ENCODE measurements at regions of chr2 and their contacts with region 1.

Region 1: GRCh38 chr2:189661148-189661956 is at the start of gene ASNSD1:
- DNase-seq: peak; percentile 99
- ATAC-seq: peak; percentile 91
- H3K4me3 ChIP-seq: peak within 1 kb of the TSS; percentile 82
- H3K27ac ChIP-seq: peak within 1 kb of the TSS; percentile 93
- H3K4me1 ChIP-seq: peaks cover 13% of the 10 kb centered on the region; the same call in 1 of the 2 replicates
- H3K27me3 ChIP-seq: no peaks in the 10 kb centered on the region
- CTCF ChIP-seq: peak; percentile 76 to 99 (median 97)
- EP300 ChIP-seq: no peak
- POLR2A ChIP-seq: peak; percentile 99
- RAD21 ChIP-seq: peak; percentile 93
- polyA plus RNA-seq, gene ASNSD1: 70.1 to 74.1 TPM

Region 2: GRCh38 chr2:189648846-189649509 is 12.4 kb before region 1 on chr2:
- CTCF ChIA-PET with region 1: interaction called, 17 read pairs
- POLR2A ChIA-PET with region 1: no interaction called
- RAD21 ChIA-PET with region 1: interaction called, 6 read pairs
- SMC1A ChIA-PET with region 1: interaction called, 9 read pairs
- in situ Hi-C with region 1: no loop called
- intact Hi-C with region 1: no loop called
- DNase-seq: no peak
- ATAC-seq: no peak
- H3K4me3 ChIP-seq: no peak overlapping the region
- H3K27ac ChIP-seq: no peak overlapping the region
- H3K4me1 ChIP-seq: no peaks in the 10 kb centered on the region
- H3K27me3 ChIP-seq: no peaks in the 10 kb centered on the region
- CTCF ChIP-seq: no peak
- EP300 ChIP-seq: no peak
- POLR2A ChIP-seq: no peak
- RAD21 ChIP-seq: no peak

Region 3: GRCh38 chr2:189698020-189698887 is 36.9 kb after region 1 on chr2:
- CTCF ChIA-PET with region 1: interaction called, 112 read pairs
- POLR2A ChIA-PET with region 1: interaction called, 3 read pairs
- RAD21 ChIA-PET with region 1: interaction called, 10 read pairs
- SMC1A ChIA-PET with region 1: interaction called, 66 read pairs
- in situ Hi-C with region 1: no loop called
- intact Hi-C with region 1: loop called (anchors 1 kb)
- DNase-seq: no peak
- ATAC-seq: peak; percentile 88
- H3K4me3 ChIP-seq: no peak overlapping the region
- H3K27ac ChIP-seq: no peak overlapping the region
- H3K4me1 ChIP-seq: no peaks in the 10 kb centered on the region
- H3K27me3 ChIP-seq: no peaks in the 10 kb centered on the region
- CTCF ChIP-seq: peak; percentile 35 to 49 (median 37); a peak in 5 of 6 replicates
- EP300 ChIP-seq: no peak
- POLR2A ChIP-seq: no peak
- RAD21 ChIP-seq: peak; percentile 44

Region 4: DNA sequence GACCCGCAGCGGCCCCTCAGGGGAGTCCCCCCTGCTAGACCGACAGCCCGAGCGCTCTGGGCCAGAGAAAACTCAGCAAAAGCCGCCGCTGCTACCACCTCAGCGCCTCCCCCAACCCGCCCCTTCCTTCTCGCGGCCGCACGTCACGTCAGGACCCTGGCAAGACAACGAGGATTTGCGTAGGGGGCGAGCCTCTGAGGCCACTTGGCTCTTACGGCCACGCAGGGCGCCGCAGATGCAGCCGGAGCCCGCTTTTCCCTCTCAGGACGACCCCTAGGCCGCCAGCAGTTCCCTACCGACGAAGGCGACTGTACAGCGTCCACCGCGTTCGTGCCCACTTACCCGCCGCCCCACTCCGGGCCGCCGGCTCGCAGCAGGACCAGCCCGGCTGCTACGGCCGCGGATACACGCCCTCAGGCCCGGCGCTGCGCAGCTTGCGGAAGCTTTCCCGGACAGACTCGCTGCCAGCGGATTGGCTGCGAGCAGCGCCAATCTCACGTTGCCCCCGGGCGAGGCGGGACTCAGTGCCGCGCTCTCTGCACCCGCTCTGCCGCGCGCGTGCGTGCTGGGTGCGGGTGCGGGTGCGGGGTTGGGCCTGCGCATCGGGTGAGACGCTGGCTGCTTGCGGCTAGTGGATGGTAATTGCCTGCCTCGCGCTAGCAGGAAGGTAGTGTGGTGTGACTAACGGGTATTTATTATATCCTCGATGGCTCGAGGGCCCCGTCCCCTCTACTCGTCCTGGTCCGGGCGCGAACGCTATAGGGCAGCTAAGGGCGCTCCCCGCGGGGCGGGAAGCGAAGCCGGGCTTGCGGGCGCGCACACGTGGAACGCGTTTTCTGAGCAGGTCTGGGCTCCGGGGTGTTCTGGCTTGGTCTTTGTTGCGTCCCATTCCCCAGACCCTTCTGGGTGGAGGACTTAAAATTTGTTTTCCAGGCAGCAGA is 122.8 kb after region 1 on chr2 and contains the starts of genes ORMDL1 and PMS1:
- CTCF ChIA-PET with region 1: interaction called, 3 read pairs
- POLR2A ChIA-PET with region 1: no interaction called
- RAD21 ChIA-PET with region 1: interaction called, 4 read pairs
- SMC1A ChIA-PET with region 1: interaction called, 3 read pairs
- in situ Hi-C with region 1: no loop called
- intact Hi-C with region 1: loop called (anchors 5 kb)
- DNase-seq: peak; percentile 86
- ATAC-seq: peak; percentile 95
- H3K4me3 ChIP-seq: peak within 1 kb of the TSS; percentile 86
- H3K27ac ChIP-seq: peak within 1 kb of the TSS; percentile 92
- H3K4me1 ChIP-seq: peaks cover 4% of the 10 kb centered on the region; the same call in 1 of the 2 replicates
- H3K27me3 ChIP-seq: no peaks in the 10 kb centered on the region
- CTCF ChIP-seq: no peak
- EP300 ChIP-seq: 0 out of 4 replicates have a peak, but pooled peaks of 1 of the 2 experiments have one; percentile 27
- POLR2A ChIP-seq: peak; percentile 99
- RAD21 ChIP-seq: no peak
- polyA plus RNA-seq, gene ORMDL1: 68.9 to 89.5 TPM
- polyA plus RNA-seq, gene PMS1: 18.7 to 19.2 TPM

Region 5: DNA sequence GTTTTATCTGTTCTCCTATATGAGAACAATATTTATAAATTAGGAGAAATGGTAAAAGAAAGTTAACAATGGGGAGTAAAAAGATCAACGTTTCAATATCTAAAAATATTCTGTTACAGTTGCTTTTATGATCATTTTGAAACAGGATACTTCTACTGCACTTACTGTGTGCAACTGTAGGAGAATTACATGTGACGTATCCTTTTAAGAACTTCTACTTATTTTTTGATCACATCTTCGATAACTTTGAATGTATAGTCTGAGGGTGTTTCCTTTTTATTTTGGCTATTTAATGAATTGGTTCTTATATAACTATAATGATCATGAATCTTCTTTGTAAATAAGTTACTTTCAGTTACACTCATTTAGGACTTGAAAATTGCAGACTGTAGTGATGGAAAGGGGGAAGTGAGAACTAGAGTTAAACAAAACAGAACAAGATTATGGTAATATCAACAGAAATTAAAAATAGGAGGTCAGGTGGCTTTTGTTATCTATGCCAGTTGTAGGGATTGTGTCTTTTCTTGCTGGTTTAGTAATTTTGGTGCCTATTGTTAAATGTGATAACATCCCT is 291.3 kb after region 1 on chr2:
- CTCF ChIA-PET with region 1: no interaction called
- POLR2A ChIA-PET with region 1: no interaction called
- RAD21 ChIA-PET with region 1: no interaction called
- SMC1A ChIA-PET with region 1: no interaction called
- in situ Hi-C with region 1: no loop called
- intact Hi-C with region 1: loop called (anchors 5 kb)
- DNase-seq: peak; percentile 65
- ATAC-seq: peak; percentile 91
- H3K4me3 ChIP-seq: no peak overlapping the region
- H3K27ac ChIP-seq: peak overlapping the region; percentile 90
- H3K4me1 ChIP-seq: peaks cover 30% of the 10 kb centered on the region
- H3K27me3 ChIP-seq: no peaks in the 10 kb centered on the region
- CTCF ChIP-seq: no peak
- EP300 ChIP-seq: peak; percentile 91 to 93
- POLR2A ChIP-seq: no peak
- RAD21 ChIP-seq: no peak

Region 6: DNA sequence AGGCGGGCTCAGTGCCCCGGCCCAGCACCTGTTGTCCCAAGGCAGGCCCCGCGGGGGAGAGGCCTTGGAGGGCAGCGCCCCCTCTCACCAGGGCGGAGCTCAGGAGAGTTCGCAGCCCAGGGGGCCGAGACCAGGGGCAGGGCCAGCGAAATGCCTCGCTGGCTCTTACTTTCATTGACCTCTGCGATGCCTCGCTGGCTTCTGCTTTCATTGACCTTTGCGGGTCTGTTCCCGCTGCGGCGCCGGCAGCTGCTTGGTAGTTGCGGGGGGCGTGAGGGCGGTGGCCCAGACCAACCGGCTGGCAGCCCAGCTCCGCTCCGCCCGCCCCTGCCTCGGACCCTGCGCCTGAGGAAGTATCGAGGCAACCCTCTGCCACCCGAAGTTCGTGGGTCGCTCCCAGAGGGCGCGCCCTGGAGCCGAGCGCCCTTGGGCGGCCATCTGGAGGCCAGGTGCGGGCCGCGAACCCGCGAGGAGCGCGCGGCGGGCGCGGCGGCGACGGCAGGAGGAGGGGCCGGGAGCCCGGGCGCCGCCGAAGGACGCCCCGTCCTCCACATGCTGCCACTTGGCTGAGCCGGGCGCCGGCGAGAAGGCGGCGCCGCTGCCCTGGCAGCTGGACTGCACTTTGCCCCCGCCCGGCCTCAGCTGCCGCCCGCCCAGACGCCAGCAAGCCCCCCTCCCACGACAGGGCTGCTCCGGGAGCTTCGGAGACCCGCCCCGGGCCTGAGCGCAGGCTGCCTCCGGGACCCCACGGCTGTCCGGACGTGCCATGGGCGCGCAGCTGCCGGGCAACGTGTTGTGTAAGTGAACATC is 519.2 kb after region 1 on chr2:
- CTCF ChIA-PET with region 1: interaction called, 4 read pairs
- POLR2A ChIA-PET with region 1: no interaction called
- RAD21 ChIA-PET with region 1: no interaction called
- SMC1A ChIA-PET with region 1: no interaction called
- in situ Hi-C with region 1: no loop called
- intact Hi-C with region 1: loop called (anchors 5 kb)
- DNase-seq: no peak
- ATAC-seq: peak; percentile 86
- H3K4me3 ChIP-seq: peak overlapping the region; percentile 73
- H3K27ac ChIP-seq: peak overlapping the region; percentile 11; the same call in 1 of the 2 replicates
- H3K4me1 ChIP-seq: peaks cover 16% of the 10 kb centered on the region
- H3K27me3 ChIP-seq: no peaks in the 10 kb centered on the region
- CTCF ChIP-seq: peak in 2 of 3 experiments; percentile 65 to 67; a peak in 5 of 6 replicates
- EP300 ChIP-seq: no peak
- POLR2A ChIP-seq: peak; percentile 60
- RAD21 ChIP-seq: no peak